WTC11 (cell line): ENCODE measurements at regions of chr1 and their contacts with region 1.

Region 1: DNA sequence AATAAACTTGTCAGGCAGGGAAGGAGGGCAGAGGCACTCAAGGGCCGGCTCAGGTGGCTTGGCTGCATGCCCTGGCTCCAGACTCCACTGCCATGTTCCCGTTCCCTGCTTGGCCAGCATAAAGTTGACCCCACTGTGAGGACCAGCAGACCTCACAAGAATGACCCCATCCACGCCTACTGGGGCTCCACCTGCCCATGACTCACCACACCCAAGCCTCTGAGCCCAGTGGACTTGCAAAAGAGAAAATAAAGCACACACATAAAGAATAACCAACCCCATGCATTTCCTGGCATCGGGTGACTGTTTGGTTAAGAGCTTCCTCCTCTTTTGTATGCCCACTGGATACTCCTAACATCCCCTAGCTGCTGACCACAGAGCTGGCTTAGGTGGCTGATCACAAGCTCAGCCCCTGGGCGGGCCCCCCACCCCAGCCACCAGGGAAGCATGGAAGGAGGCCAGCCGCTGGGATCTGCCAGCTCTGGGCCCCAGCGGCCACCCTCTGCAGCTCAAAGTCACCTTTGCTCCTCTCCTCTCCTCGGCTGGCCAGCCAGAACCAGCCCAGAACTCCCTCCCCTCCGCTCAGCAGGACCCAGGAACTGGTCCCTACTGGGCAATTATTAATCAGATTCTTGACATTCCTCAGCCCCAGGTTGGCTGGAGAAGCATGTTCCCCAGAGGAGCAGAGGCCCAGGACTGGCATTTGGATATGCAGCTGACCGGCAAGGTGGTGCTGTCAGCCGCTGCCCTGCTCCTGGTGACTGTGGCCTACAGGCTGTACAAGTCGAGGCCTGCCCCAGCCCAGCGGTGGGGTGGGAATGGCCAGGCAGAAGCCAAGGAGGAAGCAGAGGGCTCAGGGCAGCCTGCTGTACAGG is at the start of gene KLHDC7A:
- DNase-seq: peak; percentile 85
- ATAC-seq: peak; percentile 91
- H3K4me3 Mint-ChIP-seq: peak within 1 kb of the TSS; percentile 36
- H3K27ac Mint-ChIP-seq: peak within 1 kb of the TSS; percentile 94
- H3K4me1 Mint-ChIP-seq: peaks cover 49% of the 10 kb centered on the region
- H3K27me3 Mint-ChIP-seq: no peaks in the 10 kb centered on the region; the same call in 1 of the 2 replicates
- CTCF ChIP-seq: no peak
- total RNA-seq, gene KLHDC7A: 10.9 to 14.3 TPM (median 11.0 TPM) in 3 replicates

Region 2: GRCh38 chr1:18396247-18396980 is 84.1 kb before region 1 on chr1:
- CTCF ChIA-PET with region 1: interaction called, 12 read pairs
- POLR2A ChIA-PET with region 1: no interaction called
- DNase-seq: no peak
- ATAC-seq: no peak
- H3K4me3 Mint-ChIP-seq: no peak overlapping the region
- H3K27ac Mint-ChIP-seq: no peak overlapping the region
- H3K4me1 Mint-ChIP-seq: peaks cover 23% of the 10 kb centered on the region
- H3K27me3 Mint-ChIP-seq: no peaks in the 10 kb centered on the region; the same call in none of the 2 replicates
- CTCF ChIP-seq: no peak

Region 3: DNA sequence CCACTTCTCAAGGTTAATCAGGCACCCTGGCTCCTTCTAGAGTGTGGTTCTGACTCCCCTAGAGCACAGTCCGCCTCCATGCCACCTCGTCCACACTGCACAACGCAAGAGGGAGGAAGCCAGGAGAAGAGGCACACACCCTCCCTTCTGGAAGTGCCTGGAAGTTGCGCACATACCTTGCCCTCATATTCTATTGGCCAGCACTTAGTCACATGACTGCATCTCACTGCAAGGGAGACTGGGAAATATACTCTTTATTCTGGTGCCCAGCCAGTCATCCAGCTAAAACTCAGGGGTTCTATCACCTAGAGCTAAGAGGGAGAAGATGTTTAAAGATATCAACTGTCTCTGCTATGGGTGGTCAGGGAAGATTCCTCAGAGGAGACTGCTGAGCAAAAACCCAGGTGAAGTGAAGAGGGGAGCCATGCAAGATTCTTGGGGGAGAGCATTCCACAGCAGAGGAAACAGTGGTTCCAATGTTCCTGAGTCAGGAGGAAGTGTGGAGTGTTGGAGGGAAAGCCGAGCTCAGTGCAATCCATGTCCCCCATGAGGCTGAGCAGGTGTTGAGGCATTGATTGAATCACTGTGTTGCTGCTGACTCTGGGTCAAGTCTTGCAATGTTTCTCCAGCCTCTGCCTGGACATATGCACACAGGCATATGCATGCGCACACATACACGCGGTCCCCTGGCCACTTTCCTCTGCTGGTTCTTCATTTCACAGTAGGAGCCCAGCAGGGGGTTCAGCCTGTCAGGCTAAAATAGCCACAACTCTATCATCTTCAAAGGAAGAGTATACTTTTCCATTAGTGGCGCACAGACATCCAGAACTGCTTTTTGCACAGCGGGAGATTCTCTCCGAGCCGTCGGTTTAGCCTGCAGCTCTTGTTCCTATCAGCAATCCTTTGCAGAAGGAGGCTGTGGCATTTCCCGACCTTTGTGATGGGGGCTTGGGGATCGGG is 22.1 kb before region 1 on chr1:
- CTCF ChIA-PET with region 1: no interaction called
- POLR2A ChIA-PET with region 1: no interaction called
- DNase-seq: no peak
- ATAC-seq: no peak; the same call in 1 of the 2 replicates
- H3K4me3 Mint-ChIP-seq: no peak overlapping the region
- H3K27ac Mint-ChIP-seq: no peak overlapping the region
- H3K4me1 Mint-ChIP-seq: peaks cover 3% of the 10 kb centered on the region; the same call in 1 of the 2 replicates
- H3K27me3 Mint-ChIP-seq: peaks cover 42% of the 10 kb centered on the region
- CTCF ChIP-seq: no peak

Region 4: DNA sequence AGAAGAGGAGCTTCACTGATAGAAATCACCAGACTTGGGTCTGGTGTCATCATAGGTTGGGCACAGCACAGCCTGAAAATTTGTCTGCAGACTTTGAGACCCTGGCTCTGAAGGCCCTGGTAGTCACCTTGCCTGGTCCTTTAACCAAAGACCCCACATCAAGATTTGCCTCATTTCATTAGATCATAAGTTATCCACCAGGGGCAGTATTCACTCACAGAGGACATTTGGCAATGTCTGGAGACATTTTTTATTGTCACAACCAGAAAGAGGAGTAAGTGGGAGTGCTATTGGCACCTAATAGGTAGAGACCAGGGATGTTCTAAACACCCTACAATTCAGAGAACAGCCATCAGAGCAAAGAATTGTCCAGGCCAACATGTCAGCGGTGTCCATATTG is 128.0 kb after region 1 on chr1:
- CTCF ChIA-PET with region 1: no interaction called
- POLR2A ChIA-PET with region 1: no interaction called
- DNase-seq: no peak
- ATAC-seq: no peak
- H3K4me3 Mint-ChIP-seq: no peak overlapping the region
- H3K27ac Mint-ChIP-seq: no peak overlapping the region
- H3K4me1 Mint-ChIP-seq: peaks cover 3% of the 10 kb centered on the region
- H3K27me3 Mint-ChIP-seq: peaks cover 8% of the 10 kb centered on the region
- CTCF ChIP-seq: no peak